Activated naive CD4-positive, alpha-beta T cell treated with anti-CD3 and anti-CD28 coated beads for 36 hours (primary cell): ENCODE measurements at regions of chr6 and their contacts with region 1.

Region 1: GRCh38 chr6:137903933-137904821 is 37.1 kb downstream of the TNFAIP3 start:
- DNase-seq: peak; percentile 77
- H3K4me3 Mint-ChIP-seq: peak overlapping the region; percentile 71
- H3K27ac Mint-ChIP-seq: peak overlapping the region; percentile 100
- H3K4me1 Mint-ChIP-seq: peaks cover 71% of the 10 kb centered on the region
- H3K27me3 Mint-ChIP-seq: no peaks in the 10 kb centered on the region

Region 2: DNA sequence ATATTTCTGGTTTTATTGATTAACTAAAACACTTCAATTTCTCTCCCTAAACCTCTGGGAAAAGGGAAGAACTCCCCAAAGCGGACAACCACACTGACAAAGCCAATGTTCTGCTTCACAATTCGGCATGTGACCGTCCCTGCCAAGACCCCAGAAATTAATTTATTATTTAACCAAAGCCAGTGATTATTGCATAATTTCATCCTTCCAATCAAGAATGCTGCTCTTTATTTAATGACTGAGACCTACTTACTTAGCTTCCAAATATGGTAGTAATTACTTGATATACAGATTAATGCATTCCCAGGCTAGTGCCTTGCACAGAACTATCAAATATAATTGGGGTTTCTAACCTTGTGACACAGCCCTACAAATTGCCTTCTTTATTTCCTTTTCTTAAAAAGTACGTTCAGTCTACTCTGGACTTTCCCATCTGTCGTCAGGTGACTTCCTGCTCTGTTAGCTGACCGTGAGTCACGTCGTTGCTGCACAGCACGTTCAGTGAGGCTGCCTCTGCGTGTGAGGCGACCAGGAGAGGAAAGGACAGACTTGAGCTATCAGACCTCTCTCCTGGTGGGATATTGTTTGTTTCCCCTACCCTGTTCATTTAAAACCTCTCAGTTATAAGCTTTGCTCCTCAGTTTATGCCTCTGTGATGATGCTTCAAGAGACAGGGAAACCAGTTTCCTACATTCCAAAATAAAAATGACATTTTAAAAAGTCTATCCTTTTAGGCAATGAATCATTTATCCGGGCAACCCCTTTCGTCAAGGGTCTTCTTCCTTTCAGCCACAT is 92.9 kb before region 1 on chr6:
- CTCF ChIA-PET with region 1: no interaction called
- intact Hi-C with region 1: loop called (anchors 1 kb)
- DNase-seq: peak; percentile 93
- H3K4me3 Mint-ChIP-seq: peak overlapping the region; percentile 52
- H3K27ac Mint-ChIP-seq: peak overlapping the region; percentile 94
- H3K4me1 Mint-ChIP-seq: peaks cover 75% of the 10 kb centered on the region
- H3K27me3 Mint-ChIP-seq: no peaks in the 10 kb centered on the region

Region 3: GRCh38 chr6:137873273-137873762 is 30.9 kb before region 1 on chr6:
- CTCF ChIA-PET with region 1: interaction called, 5 read pairs
- intact Hi-C with region 1: loop called (anchors 1 kb)
- DNase-seq: peak; percentile 97
- H3K4me3 Mint-ChIP-seq: peak overlapping the region; percentile 89
- H3K27ac Mint-ChIP-seq: peak overlapping the region; percentile 99
- H3K4me1 Mint-ChIP-seq: peaks cover 37% of the 10 kb centered on the region
- H3K27me3 Mint-ChIP-seq: no peaks in the 10 kb centered on the region

Region 4: DNA sequence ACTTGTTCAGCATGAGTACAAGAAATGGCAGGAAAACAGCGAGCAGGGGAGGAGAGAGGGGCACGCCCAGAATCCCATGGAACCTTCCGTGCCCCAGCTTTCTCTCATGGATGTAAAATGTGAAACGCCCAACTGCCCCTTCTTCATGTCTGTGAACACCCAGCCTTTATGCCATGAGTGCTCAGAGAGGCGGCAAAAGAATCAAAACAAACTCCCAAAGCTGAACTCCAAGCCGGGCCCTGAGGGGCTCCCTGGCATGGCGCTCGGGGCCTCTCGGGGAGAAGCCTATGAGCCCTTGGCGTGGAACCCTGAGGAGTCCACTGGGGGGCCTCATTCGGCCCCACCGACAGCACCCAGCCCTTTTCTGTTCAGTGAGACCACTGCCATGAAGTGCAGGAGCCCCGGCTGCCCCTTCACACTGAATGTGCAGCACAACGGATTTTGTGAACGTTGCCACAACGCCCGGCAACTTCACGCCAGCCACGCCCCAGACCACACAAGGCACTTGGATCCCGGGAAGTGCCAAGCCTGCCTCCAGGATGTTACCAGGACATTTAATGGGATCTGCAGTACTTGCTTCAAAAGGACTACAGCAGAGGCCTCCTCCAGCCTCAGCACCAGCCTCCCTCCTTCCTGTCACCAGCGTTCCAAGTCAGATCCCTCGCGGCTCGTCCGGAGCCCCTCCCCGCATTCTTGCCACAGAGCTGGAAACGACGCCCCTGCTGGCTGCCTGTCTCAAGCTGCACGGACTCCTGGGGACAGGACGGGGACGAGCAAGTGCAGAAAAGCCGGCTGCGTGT is 25.5 kb before region 1 on chr6:
- CTCF ChIA-PET with region 1: interaction called, 5 read pairs
- intact Hi-C with region 1: loop called (anchors 1 kb)
- DNase-seq: no peak
- H3K4me3 Mint-ChIP-seq: peak overlapping the region; percentile 65
- H3K27ac Mint-ChIP-seq: peak overlapping the region; percentile 99
- H3K4me1 Mint-ChIP-seq: peaks cover 82% of the 10 kb centered on the region
- H3K27me3 Mint-ChIP-seq: no peaks in the 10 kb centered on the region

Region 5: DNA sequence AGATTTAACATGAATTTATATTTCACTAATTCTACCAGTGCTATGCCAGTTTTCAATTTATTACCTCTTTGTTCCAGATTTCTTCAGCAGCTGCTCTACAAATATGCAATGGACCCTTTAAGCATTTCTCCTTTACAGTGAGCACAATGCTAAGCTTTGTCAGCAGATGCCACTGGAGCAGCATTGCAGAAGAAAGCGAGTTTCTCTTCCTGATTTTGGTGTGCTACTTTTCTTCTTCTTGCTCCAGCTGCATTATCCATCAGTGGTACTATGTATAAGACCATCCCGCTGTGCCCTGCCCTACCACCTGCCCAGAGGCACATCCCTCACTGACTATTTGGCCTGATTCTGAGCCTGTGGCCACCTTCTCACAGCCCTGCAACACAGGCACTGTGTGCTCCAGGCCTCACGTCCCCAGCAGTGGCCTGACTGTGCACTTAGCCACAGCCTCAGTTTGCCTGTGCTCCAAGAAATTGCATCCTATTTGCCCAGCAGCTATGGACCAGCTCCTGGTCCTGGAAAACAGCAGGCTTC is 47.0 kb after region 1 on chr6:
- CTCF ChIA-PET with region 1: no interaction called
- intact Hi-C with region 1: loop called (anchors 1 kb)
- DNase-seq: no peak
- H3K4me3 Mint-ChIP-seq: no peak overlapping the region
- H3K27ac Mint-ChIP-seq: no peak overlapping the region
- H3K4me1 Mint-ChIP-seq: peaks cover 31% of the 10 kb centered on the region
- H3K27me3 Mint-ChIP-seq: no peaks in the 10 kb centered on the region

Region 6: DNA sequence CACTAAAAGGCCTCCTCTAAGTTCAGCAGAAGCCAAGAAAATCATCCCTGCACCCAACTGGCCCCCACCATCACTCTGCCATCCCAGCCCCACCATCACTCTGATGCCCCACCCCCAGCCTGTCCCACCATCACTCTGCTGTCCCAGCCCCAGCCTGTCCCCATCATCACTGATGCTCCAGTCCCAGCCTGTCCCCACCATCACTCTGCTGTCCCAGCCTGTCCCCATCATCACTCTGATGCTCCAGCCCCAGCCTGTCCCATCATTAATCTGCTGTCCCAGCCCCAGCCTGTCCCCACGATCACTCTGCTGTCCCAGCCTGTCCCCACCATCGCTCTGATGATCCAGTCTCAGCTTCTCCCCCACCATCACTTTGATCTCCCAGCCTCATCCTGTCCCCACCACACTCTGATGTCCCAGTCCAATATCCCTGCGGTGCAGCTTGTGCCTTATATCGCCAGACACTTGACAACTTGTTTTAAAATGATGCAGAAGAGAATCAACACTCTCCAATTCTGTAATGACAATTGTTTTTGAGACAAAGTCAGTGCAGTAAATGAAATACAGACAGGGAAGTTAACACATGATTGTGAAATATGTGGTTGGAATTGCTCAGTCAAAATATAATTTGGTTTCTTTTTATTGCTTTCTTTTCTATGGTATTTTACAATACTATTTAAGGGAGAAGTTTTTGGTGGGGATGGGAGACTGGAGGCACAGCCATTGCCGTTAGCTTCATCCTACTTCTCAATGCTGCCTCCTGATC is 63.7 kb after region 1 on chr6:
- CTCF ChIA-PET with region 1: no interaction called
- intact Hi-C with region 1: loop called (anchors 1 kb)
- DNase-seq: peak; percentile 18
- H3K4me3 Mint-ChIP-seq: no peak overlapping the region
- H3K27ac Mint-ChIP-seq: peak overlapping the region; percentile 85
- H3K4me1 Mint-ChIP-seq: peaks cover 52% of the 10 kb centered on the region
- H3K27me3 Mint-ChIP-seq: no peaks in the 10 kb centered on the region

Region 7: GRCh38 chr6:138063726-138064125 is 159.5 kb after region 1 on chr6:
- CTCF ChIA-PET with region 1: no interaction called
- intact Hi-C with region 1: no loop called
- DNase-seq: no peak
- H3K4me3 Mint-ChIP-seq: no peak overlapping the region
- H3K27ac Mint-ChIP-seq: no peak overlapping the region
- H3K4me1 Mint-ChIP-seq: no peaks in the 10 kb centered on the region
- H3K27me3 Mint-ChIP-seq: peaks cover 7% of the 10 kb centered on the region

Region 8: DNA sequence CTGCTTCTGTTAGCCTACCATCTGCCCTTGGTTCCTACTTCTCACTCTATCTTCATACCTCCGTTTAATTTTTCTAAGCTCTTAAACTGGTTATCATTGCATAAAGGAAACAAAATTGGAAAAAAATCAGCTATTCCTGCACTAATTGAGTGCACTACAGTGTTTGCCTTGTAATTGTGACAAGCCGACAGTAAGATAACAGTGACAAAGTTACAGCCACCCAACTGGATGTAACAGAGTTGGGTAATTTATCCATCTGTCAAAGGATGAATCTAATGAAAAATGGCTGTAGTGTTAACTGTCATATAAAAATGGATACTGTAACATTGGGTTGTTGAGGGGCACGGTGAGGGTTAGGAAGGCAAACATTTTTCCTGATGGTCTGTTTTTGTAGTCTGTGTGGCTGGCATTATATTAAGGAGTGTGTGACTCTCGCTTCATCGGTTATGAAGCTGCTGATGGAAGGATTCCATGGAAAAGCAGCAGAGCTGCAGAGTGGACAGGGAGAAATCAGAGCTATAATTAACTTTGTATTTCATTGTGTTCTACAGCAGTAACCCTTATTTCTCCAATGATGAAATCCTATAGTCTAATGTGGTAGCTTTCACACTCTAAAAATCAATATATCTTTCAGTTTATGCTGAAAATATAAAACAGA is 301.4 kb after region 1 on chr6:
- CTCF ChIA-PET with region 1: no interaction called
- intact Hi-C with region 1: no loop called
- DNase-seq: no peak
- H3K4me3 Mint-ChIP-seq: no peak overlapping the region
- H3K27ac Mint-ChIP-seq: no peak overlapping the region
- H3K4me1 Mint-ChIP-seq: no peaks in the 10 kb centered on the region
- H3K27me3 Mint-ChIP-seq: peaks cover 14% of the 10 kb centered on the region